Lower leg skin (tissue), 4 donors: ENCODE measurements at regions of chr1 and their contacts with region 1.

Region 1: GRCh38 chr1:210200124-210200736 is 32.4 kb upstream of the SERTAD4 start:
- DNase-seq: no peak
- H3K4me3 ChIP-seq: no peak overlapping the region
- CTCF ChIP-seq: no peak
- POLR2A ChIP-seq: no peak

Region 2: GRCh38 chr1:210301615-210302000 is 101.4 kb after region 1 on chr1:
- intact Hi-C with region 1: loop called (anchors 10 kb)
- DNase-seq: no peak
- H3K4me3 ChIP-seq: no peak overlapping the region
- CTCF ChIP-seq: no peak
- POLR2A ChIP-seq: no peak